Thyroid gland (tissue), 4 donors: ENCODE measurements at regions of chrX and their contacts with region 1.

Region 1: GRCh38 chrX:134512566-134512965 is 52.6 kb downstream of the HPRT1 start:
- DNase-seq: no peak
- H3K4me3 ChIP-seq: no peak overlapping the region
- H3K27ac ChIP-seq: no peak overlapping the region
- H3K4me1 ChIP-seq: no peaks in the 10 kb centered on the region
- H3K27me3 ChIP-seq: no peaks in the 10 kb centered on the region
- CTCF ChIP-seq: no peak
- POLR2A ChIP-seq: no peak

Region 2: GRCh38 chrX:134435894-134436293 is 76.7 kb before region 1 on chrX:
- intact Hi-C with region 1: no loop called
- DNase-seq: no peak
- H3K4me3 ChIP-seq: no peak overlapping the region
- H3K27ac ChIP-seq: no peak overlapping the region
- H3K4me1 ChIP-seq: no peaks in the 10 kb centered on the region
- H3K27me3 ChIP-seq: no peaks in the 10 kb centered on the region
- CTCF ChIP-seq: no peak
- POLR2A ChIP-seq: no peak

Region 3: DNA sequence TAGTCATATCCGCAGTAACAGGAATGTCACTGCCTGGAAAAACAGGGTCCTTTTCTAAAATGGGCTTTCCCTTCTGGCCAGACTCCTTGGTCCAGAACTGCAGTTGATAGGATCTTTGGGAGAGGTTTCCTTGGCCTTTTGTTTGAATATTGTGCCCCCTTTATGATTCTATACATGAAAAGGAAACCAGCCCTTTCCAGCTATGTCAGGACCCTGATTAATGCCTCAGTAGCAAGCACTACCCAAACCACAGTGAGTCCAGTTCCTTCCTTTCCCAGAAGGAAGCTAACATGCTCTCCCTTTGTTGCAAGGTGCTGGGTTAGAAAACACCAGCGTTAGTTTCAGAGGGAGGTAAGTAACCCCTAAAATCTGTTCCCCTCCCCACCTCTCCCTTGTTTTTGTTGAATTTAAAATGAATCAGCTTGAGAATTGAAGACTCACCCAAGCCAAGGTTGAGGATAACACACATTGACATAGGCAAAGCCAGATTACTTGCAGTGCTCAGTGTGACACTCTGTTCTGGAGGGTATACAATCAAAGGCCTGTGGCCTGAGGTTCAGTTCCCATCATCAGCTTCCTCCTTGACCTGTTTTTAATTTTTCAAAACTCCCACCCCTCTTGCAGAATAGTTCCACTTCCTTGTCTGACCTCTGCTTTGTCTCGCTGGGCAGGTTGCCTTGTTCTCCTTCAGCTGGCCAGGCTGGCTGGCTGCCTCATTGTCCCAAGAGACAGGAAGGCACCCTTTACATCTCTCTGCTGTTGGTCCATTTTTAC is 233.3 kb after region 1 on chrX:
- intact Hi-C with region 1: loop called (anchors 10 kb)
- DNase-seq: no peak
- H3K4me3 ChIP-seq: no peak overlapping the region
- H3K27ac ChIP-seq: no peak overlapping the region
- H3K4me1 ChIP-seq: no peaks in the 10 kb centered on the region
- H3K27me3 ChIP-seq: no peaks in the 10 kb centered on the region
- CTCF ChIP-seq: no peak
- POLR2A ChIP-seq: no peak

Region 4: GRCh38 chrX:135024526-135024925 is 512.0 kb after region 1 on chrX:
- intact Hi-C with region 1: no loop called
- DNase-seq: no peak
- H3K4me3 ChIP-seq: no peak overlapping the region
- H3K27ac ChIP-seq: no peak overlapping the region
- H3K4me1 ChIP-seq: peaks cover 0 to 5% of the 10 kb centered on the region in 2 donors
- H3K27me3 ChIP-seq: no peaks in the 10 kb centered on the region
- CTCF ChIP-seq: no peak
- POLR2A ChIP-seq: no peak